MCF 10A (cell line): ENCODE measurements at regions of chr14 and their contacts with region 1.

Region 1: DNA sequence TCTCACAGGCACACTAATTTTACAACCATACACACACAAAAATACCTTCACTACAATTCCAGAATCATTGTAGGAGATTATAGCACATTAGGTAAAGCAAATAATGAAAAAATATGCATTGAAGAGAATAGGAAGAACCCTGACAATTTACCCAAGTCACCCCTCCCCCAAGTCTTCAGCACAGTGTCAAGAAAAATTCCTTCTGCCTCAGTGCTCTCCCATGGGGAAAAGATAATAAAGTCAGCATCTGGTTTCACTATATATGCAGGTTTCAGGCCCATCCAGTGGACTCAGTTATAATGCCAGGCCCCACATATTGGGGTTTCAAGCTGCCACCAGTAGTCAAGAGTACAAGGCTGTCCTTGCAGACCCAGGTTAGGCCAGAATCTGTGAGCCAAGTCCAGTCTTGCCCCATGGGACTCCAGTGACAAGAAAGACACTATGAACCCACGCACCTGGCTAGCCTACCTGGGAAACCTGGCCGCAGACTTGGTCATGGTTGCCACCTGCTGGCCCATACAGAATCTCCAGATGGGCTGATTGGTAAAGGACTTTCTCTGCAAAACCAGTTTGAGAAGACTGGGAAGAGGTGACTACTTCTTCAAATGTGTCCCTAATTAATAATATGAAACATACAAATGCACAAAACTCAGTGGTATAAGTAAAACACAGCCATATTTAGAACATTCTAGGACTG is 398.6 kb upstream of the FLRT2 start:
- DNase-seq: peak; percentile 48
- H3K4me3 Mint-ChIP-seq: no peak overlapping the region
- H3K27ac Mint-ChIP-seq: no peak overlapping the region
- H3K4me1 Mint-ChIP-seq: no peaks in the 10 kb centered on the region
- H3K27me3 Mint-ChIP-seq: no peaks in the 10 kb centered on the region
- CTCF ChIP-seq: peak; percentile 53

Region 2: GRCh38 chr14:83988274-83988673 is 1143.1 kb before region 1 on chr14:
- CTCF ChIA-PET with region 1: interaction called, 3 read pairs
- POLR2A ChIA-PET with region 1: no interaction called
- intact Hi-C with region 1: loop called (anchors 1 kb)
- DNase-seq: peak; percentile 45
- H3K4me3 Mint-ChIP-seq: no peak overlapping the region
- H3K27ac Mint-ChIP-seq: no peak overlapping the region
- H3K4me1 Mint-ChIP-seq: peaks cover 17% of the 10 kb centered on the region
- H3K27me3 Mint-ChIP-seq: no peaks in the 10 kb centered on the region
- CTCF ChIP-seq: peak; percentile 23

Region 3: DNA sequence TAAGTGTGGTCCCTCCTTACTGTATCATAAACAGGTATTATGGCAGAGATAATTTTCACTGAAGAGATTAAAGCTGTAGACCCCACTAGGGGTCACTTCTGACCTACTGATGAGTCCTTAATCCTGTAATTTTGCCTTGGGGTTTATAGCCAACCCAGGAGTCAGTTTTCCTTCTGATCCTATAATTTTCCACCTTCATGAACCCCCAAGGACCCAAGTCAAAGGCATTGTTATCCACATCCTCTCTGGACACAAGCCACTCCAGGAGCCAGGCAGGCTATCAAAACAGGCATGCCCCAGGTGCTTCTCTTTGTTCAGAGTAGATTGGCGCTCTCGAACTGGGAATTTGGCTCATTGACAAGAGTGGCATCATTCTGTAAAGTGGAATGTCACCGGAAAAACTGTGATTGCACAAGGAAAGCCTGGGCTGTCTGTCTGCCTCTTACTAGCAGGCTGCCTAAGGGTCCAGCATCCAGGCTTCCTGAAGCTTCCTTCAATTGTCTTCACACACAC is 1124.7 kb before region 1 on chr14:
- CTCF ChIA-PET with region 1: no interaction called
- POLR2A ChIA-PET with region 1: no interaction called
- intact Hi-C with region 1: loop called (anchors 5 kb)
- DNase-seq: peak; percentile 65
- H3K4me3 Mint-ChIP-seq: no peak overlapping the region
- H3K27ac Mint-ChIP-seq: no peak overlapping the region
- H3K4me1 Mint-ChIP-seq: peaks cover 9% of the 10 kb centered on the region
- H3K27me3 Mint-ChIP-seq: no peaks in the 10 kb centered on the region
- CTCF ChIP-seq: peak; percentile 16

Region 4: GRCh38 chr14:84458881-84459280 is 672.5 kb before region 1 on chr14:
- CTCF ChIA-PET with region 1: no interaction called
- POLR2A ChIA-PET with region 1: no interaction called
- intact Hi-C with region 1: no loop called
- DNase-seq: no peak
- H3K4me3 Mint-ChIP-seq: no peak overlapping the region
- H3K27ac Mint-ChIP-seq: no peak overlapping the region
- H3K4me1 Mint-ChIP-seq: no peaks in the 10 kb centered on the region
- H3K27me3 Mint-ChIP-seq: no peaks in the 10 kb centered on the region
- CTCF ChIP-seq: no peak

Region 5: DNA sequence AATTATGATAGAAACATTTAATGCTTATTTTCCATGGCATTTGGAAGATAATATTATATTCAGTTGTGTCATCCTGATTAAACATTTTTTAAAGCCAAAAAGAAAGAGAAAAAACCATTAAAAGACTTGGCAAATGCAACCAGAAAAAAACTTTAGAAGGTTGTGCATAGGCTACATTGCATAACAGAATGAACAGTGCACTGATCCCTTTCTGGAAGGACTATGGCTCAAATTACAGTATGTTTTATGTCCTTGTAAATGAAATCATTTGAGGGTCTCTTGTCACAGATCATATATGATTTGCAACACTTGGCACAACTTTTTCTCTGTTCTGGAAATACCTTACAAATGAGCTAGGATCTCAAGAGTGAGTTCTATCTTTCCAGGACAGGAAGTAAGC is 123.3 kb after region 1 on chr14:
- CTCF ChIA-PET with region 1: no interaction called
- POLR2A ChIA-PET with region 1: no interaction called
- intact Hi-C with region 1: no loop called
- DNase-seq: no peak
- H3K4me3 Mint-ChIP-seq: no peak overlapping the region
- H3K27ac Mint-ChIP-seq: no peak overlapping the region
- H3K4me1 Mint-ChIP-seq: peaks cover 25% of the 10 kb centered on the region
- H3K27me3 Mint-ChIP-seq: no peaks in the 10 kb centered on the region
- CTCF ChIP-seq: no peak